ENCODE measurements at regions of chr14 and their contacts with region 1.

Region 1: GRCh38 chr14:68412505-68413496 is 380.1 kb downstream of the ZFP36L1 start:
- DNase-seq: no peak
- H3K4me3 ChIP-seq: no peak overlapping the region
- H3K4me3 Mint-ChIP-seq: no peak overlapping the region
- H3K27ac ChIP-seq: no peak overlapping the region
- H3K27ac Mint-ChIP-seq: no peak overlapping the region
- H3K4me1 ChIP-seq: peaks cover 11 to 13% of the 10 kb centered on the region in 2 donors
- H3K4me1 Mint-ChIP-seq: peaks cover 16% of the 10 kb centered on the region
- H3K27me3 ChIP-seq: no peaks in the 10 kb centered on the region
- H3K27me3 Mint-ChIP-seq: peaks cover 0 to 4% (median under 1%) of the 10 kb centered on the region in 3 donors
- CTCF ChIP-seq: no peak

Region 2: DNA sequence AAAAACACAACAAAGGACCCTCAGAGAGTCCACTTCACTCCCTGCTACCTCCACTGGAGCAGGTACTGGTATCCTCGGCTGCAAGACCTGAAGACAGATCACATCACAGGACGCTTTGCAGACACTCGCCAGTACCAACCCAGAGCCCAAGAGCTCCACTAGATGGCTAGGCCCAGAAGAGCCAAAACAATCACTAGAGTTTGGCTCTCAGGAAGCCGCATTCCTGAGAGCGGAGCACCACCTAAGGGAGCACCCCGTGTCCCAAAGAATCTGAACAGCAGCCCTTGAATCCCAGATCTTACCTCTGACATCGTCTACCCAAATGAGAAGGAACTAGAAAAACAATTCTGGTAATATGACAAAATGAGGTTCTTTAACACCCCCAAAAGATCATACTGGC is 193.4 kb before region 1 on chr14:
- intact Hi-C with region 1: no loop called
- DNase-seq: no peak
- H3K4me3 ChIP-seq: no peak overlapping the region
- H3K4me3 Mint-ChIP-seq: no peak overlapping the region
- H3K27ac ChIP-seq: no peak overlapping the region
- H3K27ac Mint-ChIP-seq: no peak overlapping the region
- H3K4me1 ChIP-seq: peaks cover 10 to 12% of the 10 kb centered on the region in 2 donors
- H3K4me1 Mint-ChIP-seq: peaks cover 12% of the 10 kb centered on the region
- H3K27me3 ChIP-seq: no peaks in the 10 kb centered on the region
- H3K27me3 Mint-ChIP-seq: peaks cover 0 to 2% (median 0%) of the 10 kb centered on the region in 3 donors
- CTCF ChIP-seq: no peak

Region 3: DNA sequence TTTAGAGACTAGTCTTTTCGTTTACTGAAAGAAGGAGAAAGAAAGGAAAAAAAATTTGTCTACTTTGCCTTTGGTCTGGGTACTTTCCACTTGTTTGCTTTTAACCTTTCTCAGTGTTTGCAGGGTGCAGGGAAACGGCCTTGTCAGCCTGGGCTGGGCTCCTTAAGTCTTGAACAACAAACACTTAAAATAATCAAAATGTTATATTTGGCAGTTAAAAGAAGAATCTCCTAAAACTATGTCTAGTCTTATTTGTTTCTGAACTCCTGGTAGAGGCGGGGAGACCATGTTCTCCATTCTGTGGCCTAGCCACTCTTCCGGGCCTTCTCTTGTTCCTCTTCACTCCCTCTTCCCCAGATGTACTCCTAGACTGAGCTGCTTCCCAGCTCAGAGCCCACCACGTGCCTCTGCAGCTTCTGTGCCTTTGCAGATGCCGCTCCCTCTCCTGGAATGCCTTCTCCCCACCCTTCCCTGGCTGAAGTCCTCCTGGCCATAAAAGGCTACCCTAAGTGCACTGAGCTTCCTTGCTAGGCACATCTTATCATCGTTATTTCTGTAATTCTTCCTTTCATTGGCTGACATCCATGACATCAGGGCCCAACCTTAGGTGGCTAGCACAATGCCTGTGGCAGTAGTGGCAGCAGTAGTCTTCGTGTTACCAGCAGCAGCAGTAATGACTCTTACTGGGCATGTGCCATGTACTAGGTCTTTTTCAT is 52.8 kb before region 1 on chr14:
- intact Hi-C with region 1: loop called in 1 of 2 experiments (anchors 5 kb)
- DNase-seq: peak in 2 of 3 donors; percentile 29 to 51
- H3K4me3 ChIP-seq: no peak overlapping the region
- H3K4me3 Mint-ChIP-seq: no peak overlapping the region
- H3K27ac ChIP-seq: peak overlapping the region in 1 of 2 donors; percentile 63
- H3K27ac Mint-ChIP-seq: peak overlapping the region; percentile 71 to 86 (median 80)
- H3K4me1 ChIP-seq: peaks cover 37 to 41% of the 10 kb centered on the region in 2 donors
- H3K4me1 Mint-ChIP-seq: peaks cover 48% of the 10 kb centered on the region
- H3K27me3 ChIP-seq: no peaks in the 10 kb centered on the region
- H3K27me3 Mint-ChIP-seq: peaks cover 0 to 1% (median 0%) of the 10 kb centered on the region in 3 donors
- CTCF ChIP-seq: no peak